HepG2 (cell line): ENCODE measurements at regions of chrX and their contacts with region 1.

Region 1: GRCh38 chrX:100368167-100368566 is 41.9 kb downstream of the PCDH19 start:
- DNase-seq: peak; percentile 0
- ATAC-seq: peak; percentile 92
- H3K4me3 ChIP-seq: no peak overlapping the region
- H3K27ac ChIP-seq: no peak overlapping the region
- H3K4me1 ChIP-seq: no peaks in the 10 kb centered on the region
- H3K27me3 ChIP-seq: no peaks in the 10 kb centered on the region
- CTCF ChIP-seq: peak; percentile 63
- EP300 ChIP-seq: no peak
- POLR2A ChIP-seq: no peak
- RAD21 ChIP-seq: no peak

Region 2: DNA sequence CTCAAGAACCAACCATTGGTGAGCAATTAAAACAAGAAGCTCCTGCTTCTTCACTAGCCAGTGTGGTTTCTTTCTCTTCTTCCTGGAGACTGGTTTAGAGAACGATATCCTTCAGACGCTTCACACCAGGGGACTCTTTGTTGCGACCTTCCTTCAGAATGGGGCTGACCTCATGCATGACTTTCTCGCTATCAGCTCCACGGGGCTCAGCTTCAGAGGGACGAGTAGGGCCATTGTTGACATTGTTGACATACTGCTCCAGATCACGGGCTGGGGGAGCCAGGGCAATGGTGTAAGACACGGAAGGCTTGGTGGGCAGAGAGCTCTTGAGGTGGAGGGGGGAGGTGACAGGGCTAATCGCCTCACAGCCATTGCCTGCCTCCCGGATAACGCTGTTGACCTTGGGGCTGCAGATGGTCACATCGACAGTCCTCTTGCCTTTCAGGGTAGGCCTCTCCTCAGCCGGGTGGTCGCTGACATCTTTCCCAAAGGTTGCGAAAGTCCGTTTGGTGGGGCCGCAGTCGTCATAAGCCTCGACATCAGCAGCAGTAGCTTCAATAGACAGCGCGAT is 71.9 kb before region 1 on chrX:
- CTCF ChIA-PET with region 1: no interaction called
- POLR2A ChIA-PET with region 1: no interaction called
- in situ Hi-C with region 1: no loop called
- intact Hi-C with region 1: no loop called
- DNase-seq: no peak
- ATAC-seq: no peak
- H3K4me3 ChIP-seq: no peak overlapping the region
- H3K27ac ChIP-seq: no peak overlapping the region
- H3K4me1 ChIP-seq: no peaks in the 10 kb centered on the region
- H3K27me3 ChIP-seq: no peaks in the 10 kb centered on the region
- CTCF ChIP-seq: no peak
- EP300 ChIP-seq: no peak
- POLR2A ChIP-seq: no peak
- RAD21 ChIP-seq: no peak

Region 3: GRCh38 chrX:100395781-100396180 is 27.6 kb after region 1 on chrX:
- CTCF ChIA-PET with region 1: no interaction called
- POLR2A ChIA-PET with region 1: no interaction called
- in situ Hi-C with region 1: no loop called
- intact Hi-C with region 1: no loop called
- DNase-seq: no peak
- ATAC-seq: no peak
- H3K4me3 ChIP-seq: no peak overlapping the region
- H3K27ac ChIP-seq: no peak overlapping the region
- H3K4me1 ChIP-seq: no peaks in the 10 kb centered on the region
- H3K27me3 ChIP-seq: no peaks in the 10 kb centered on the region
- CTCF ChIP-seq: no peak
- EP300 ChIP-seq: no peak
- POLR2A ChIP-seq: no peak
- RAD21 ChIP-seq: no peak

Region 4: DNA sequence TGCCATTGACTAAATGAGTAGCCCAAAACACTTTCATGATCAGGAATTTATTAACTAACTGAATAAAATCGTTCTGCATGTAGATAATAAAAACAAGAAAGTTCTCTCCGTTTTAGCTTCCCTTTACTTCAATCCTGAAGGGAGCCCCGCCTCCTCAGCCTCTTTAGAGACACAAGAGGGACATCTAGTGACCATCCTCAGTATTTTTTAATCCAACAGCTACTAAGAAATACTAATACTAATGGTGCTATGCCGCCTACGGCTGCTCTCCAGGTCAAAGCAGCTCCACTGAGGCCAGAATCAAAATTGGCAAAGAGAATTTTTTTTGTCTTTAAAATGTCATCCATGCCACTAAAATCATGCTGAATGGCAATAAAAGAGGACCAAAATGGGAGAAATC is 45.1 kb after region 1 on chrX:
- CTCF ChIA-PET with region 1: no interaction called
- POLR2A ChIA-PET with region 1: no interaction called
- in situ Hi-C with region 1: no loop called
- intact Hi-C with region 1: loop called (anchors 1 kb)
- DNase-seq: peak; percentile 33
- ATAC-seq: peak; percentile 74
- H3K4me3 ChIP-seq: no peak overlapping the region
- H3K27ac ChIP-seq: no peak overlapping the region
- H3K4me1 ChIP-seq: no peaks in the 10 kb centered on the region
- H3K27me3 ChIP-seq: no peaks in the 10 kb centered on the region
- CTCF ChIP-seq: peak; percentile 53
- EP300 ChIP-seq: no peak
- POLR2A ChIP-seq: no peak
- RAD21 ChIP-seq: no peak